Common myeloid progenitor, CD34-positive (primary cell): ENCODE measurements at regions of chr18 and their contacts with region 1.

Region 1: GRCh38 chr18:9506046-9506792 is 30.9 kb downstream of the RALBP1 start:
- DNase-seq: no peak
- H3K4me3 ChIP-seq: no peak overlapping the region
- H3K27ac ChIP-seq: no peak overlapping the region
- H3K4me1 ChIP-seq: peaks cover 0 to 6% (median 0%) of the 10 kb centered on the region in 4 experiments
- H3K27me3 ChIP-seq: no peaks in the 10 kb centered on the region

Region 2: GRCh38 chr18:9516437-9517064 is 10.3 kb after region 1 on chr18:
- CTCF ChIA-PET with region 1: interaction called, 14 read pairs
- POLR2A ChIA-PET with region 1: no interaction called
- DNase-seq: peak; percentile 45 to 67 (median 65)
- H3K4me3 ChIP-seq: no peak overlapping the region
- H3K27ac ChIP-seq: no peak overlapping the region
- H3K4me1 ChIP-seq: peaks cover 0 to 4% (median 0%) of the 10 kb centered on the region in 4 experiments
- H3K27me3 ChIP-seq: no peaks in the 10 kb centered on the region